GM13976 (cell line): ENCODE measurements at regions of chr4 and their contacts with region 1.

Region 1: GRCh38 chr4:41281038-41281634 is 24.4 kb downstream of the UCHL1 start:
- DNase-seq: peak; percentile 78
- CTCF ChIP-seq: peak; percentile 85

Region 2: GRCh38 chr4:40933272-40934053 is 347.7 kb before region 1 on chr4:
- in situ Hi-C with region 1: no loop called
- DNase-seq: no peak
- CTCF ChIP-seq: no peak

Region 3: GRCh38 chr4:41661442-41662076 is 380.4 kb after region 1 on chr4:
- in situ Hi-C with region 1: loop called (anchors 10 kb)
- DNase-seq: peak; percentile 49
- CTCF ChIP-seq: peak; percentile 70

Region 4: GRCh38 chr4:41696131-41696530 is 415.0 kb after region 1 on chr4:
- in situ Hi-C with region 1: no loop called
- DNase-seq: no peak
- CTCF ChIP-seq: no peak

Region 5: GRCh38 chr4:41882625-41883347 is 601.6 kb after region 1 on chr4:
- in situ Hi-C with region 1: loop called (anchors 25 kb)
- DNase-seq: peak; percentile 86
- CTCF ChIP-seq: peak; percentile 86